Activated CD8-positive, alpha-beta T cell treated with anti-CD3 and anti-CD28 coated beads, Interleukin-2, amount 10 ng/mL, durations not matched to agents 7 days and 5 days (primary cell): ENCODE measurements at regions of chr2 and their contacts with region 1.

Region 1: GRCh38 chr2:174697255-174697654 is 67.0 kb downstream of the CHRNA1 start:
- DNase-seq: peak; percentile 81
- ATAC-seq: peak; percentile 96
- H3K4me3 Mint-ChIP-seq: no peak overlapping the region
- H3K27ac Mint-ChIP-seq: no peak overlapping the region
- H3K4me1 Mint-ChIP-seq: peaks cover 6% of the 10 kb centered on the region
- H3K27me3 Mint-ChIP-seq: peaks cover 20% of the 10 kb centered on the region

Region 2: DNA sequence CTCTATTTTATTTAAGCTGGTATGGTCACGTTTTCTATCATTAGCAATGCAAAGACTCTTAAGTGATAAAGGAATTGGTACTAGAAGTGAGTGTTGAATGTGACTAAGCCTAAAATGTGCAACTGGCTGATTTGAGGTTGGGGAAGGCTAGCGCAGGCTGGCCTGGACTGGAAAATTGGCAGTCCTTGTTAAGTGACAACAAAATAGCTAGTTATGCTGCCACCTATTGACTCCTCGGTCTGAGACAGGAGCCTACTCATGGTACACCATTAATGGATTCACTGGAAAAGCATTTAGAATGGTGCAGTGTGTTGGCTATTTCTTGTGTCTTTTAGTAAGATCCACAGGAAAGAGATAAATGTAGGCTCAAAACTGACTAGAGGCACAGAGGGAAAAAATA is 94.0 kb before region 1 on chr2:
- CTCF ChIA-PET with region 1: interaction called, 10 read pairs
- POLR2A ChIA-PET with region 1: no interaction called
- DNase-seq: peak; percentile 68
- ATAC-seq: peak; percentile 54
- H3K4me3 Mint-ChIP-seq: no peak overlapping the region
- H3K27ac Mint-ChIP-seq: no peak overlapping the region
- H3K4me1 Mint-ChIP-seq: peaks cover 88% of the 10 kb centered on the region
- H3K27me3 Mint-ChIP-seq: no peaks in the 10 kb centered on the region

Region 3: DNA sequence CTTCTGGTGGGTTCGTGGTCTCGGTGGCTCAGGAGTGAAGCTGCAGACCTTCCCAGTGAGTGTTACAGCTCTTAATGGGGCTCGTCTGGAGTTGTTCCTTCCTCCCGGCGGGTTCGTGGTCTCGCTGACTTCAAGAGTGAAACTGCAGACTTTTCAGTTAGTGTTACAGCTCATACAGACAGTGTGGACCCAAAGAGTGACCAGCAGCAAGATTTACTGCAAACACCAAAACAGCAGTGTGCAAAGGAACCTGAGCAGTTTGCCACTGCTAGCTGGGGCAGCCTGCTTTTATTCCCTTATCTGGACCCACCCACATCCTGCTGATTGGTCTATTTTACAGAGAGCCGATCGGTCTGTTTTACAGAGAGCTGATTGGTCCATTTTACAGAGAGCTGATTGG is 11.5 kb after region 1 on chr2:
- CTCF ChIA-PET with region 1: interaction called, 11 read pairs
- POLR2A ChIA-PET with region 1: no interaction called
- DNase-seq: no peak
- ATAC-seq: no peak
- H3K4me3 Mint-ChIP-seq: no peak overlapping the region
- H3K27ac Mint-ChIP-seq: no peak overlapping the region
- H3K4me1 Mint-ChIP-seq: peaks cover 6% of the 10 kb centered on the region
- H3K27me3 Mint-ChIP-seq: peaks cover 21% of the 10 kb centered on the region

Region 4: GRCh38 chr2:174738841-174739240 is 41.6 kb after region 1 on chr2:
- CTCF ChIA-PET with region 1: interaction called, 18 read pairs
- POLR2A ChIA-PET with region 1: no interaction called
- DNase-seq: no peak
- ATAC-seq: no peak
- H3K4me3 Mint-ChIP-seq: no peak overlapping the region
- H3K27ac Mint-ChIP-seq: no peak overlapping the region
- H3K4me1 Mint-ChIP-seq: no peaks in the 10 kb centered on the region
- H3K27me3 Mint-ChIP-seq: peaks cover 23% of the 10 kb centered on the region

Region 5: DNA sequence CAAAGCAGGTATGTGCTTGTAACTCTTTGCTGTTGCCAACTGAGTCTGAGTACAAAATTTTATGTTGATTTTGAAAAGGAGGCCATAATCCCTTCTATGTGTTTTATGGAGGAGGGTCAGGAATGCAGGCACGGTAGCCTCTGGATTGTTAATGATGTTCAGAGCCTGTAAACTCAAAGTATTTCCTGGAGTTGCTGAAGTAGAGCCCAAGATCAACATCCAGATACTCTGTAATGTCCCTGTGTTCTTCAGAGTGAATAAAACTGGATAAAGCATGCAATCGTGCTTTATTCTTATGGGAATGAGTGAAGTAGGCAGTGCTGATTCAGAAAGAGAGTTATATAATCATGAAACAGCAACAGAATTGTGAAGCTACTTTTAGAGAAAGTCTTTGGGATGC is 128.8 kb after region 1 on chr2:
- CTCF ChIA-PET with region 1: no interaction called
- POLR2A ChIA-PET with region 1: no interaction called
- DNase-seq: no peak
- ATAC-seq: no peak
- H3K4me3 Mint-ChIP-seq: no peak overlapping the region
- H3K27ac Mint-ChIP-seq: no peak overlapping the region
- H3K4me1 Mint-ChIP-seq: no peaks in the 10 kb centered on the region
- H3K27me3 Mint-ChIP-seq: no peaks in the 10 kb centered on the region

Region 6: GRCh38 chr2:174985630-174986029 is 288.4 kb after region 1 on chr2:
- CTCF ChIA-PET with region 1: interaction called, 54 read pairs
- POLR2A ChIA-PET with region 1: no interaction called
- DNase-seq: no peak
- ATAC-seq: no peak
- H3K4me3 Mint-ChIP-seq: no peak overlapping the region
- H3K27ac Mint-ChIP-seq: no peak overlapping the region
- H3K4me1 Mint-ChIP-seq: peaks cover 2% of the 10 kb centered on the region
- H3K27me3 Mint-ChIP-seq: peaks cover 11% of the 10 kb centered on the region